ENCODE measurements at regions of chr3 and their contacts with region 1.

Region 1: GRCh38 chr3:27357665-27358258 is 11.4 kb downstream of the NEK10 start:
- DNase-seq: peak; percentile 88
- H3K4me3 Mint-ChIP-seq: no peak overlapping the region
- H3K27ac Mint-ChIP-seq: no peak overlapping the region
- H3K4me1 Mint-ChIP-seq: peaks cover 18% of the 10 kb centered on the region
- H3K27me3 Mint-ChIP-seq: peaks cover 10% of the 10 kb centered on the region

Region 2: DNA sequence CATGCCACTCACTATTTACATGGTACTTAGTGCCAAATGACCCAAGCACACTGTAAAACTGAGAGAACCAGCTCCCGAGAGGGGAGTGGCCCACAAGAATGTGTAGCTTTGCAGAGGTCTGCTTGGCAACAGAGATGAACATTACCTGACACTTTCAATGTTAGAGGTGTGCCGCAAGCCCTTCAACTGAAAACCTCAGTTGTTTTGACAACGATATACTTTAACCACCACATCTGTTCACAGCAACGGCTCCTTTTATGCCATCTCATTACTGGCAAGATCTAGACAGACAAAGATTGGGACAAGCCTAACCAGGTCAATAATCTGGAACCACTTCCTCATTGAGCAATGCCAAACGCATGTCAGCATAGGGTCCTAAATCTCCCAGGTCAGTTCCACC is 12.3 kb before region 1 on chr3:
- intact Hi-C with region 1: no loop called
- DNase-seq: peak; percentile 57
- H3K4me3 Mint-ChIP-seq: no peak overlapping the region
- H3K27ac Mint-ChIP-seq: no peak overlapping the region
- H3K4me1 Mint-ChIP-seq: peaks cover 2% of the 10 kb centered on the region
- H3K27me3 Mint-ChIP-seq: peaks cover 6% of the 10 kb centered on the region

Region 3: DNA sequence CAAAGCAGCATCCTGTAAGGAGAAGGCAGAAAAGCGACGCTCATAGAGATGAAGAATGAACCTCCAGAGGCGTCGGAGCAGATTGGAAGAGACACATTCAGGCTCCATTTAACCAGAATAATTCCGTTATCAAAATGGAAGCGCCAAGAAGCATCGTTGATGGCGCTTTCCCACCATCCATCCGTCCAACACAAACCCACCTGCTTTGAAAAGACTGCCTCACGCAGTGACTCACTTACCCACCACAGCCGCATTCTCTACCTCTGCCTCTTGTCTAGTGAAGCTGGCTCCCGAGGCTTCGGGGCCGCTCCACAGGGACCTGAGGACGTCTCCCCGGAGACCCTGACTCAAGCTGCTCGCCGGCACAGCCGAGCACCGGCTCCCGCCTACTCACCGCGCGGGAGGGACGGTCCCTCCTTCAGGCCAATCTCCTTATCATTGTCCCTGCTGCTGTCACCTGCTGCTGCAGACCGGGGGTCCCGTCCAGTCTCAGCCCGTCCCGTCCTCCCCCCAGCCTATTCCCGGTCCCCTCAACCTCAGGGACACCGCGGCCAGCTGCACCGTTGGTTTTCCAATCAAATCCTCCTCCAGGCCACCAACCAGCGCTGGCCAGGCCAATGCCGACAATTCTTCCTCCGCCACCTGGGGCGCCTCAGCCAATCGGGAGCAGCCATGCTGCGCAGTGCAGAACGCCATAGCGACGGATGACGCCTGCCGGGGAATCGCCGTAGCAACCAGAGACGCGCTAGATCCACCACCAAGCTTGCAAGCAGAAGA is 11.3 kb after region 1 on chr3 and contains the start of gene NEK10:
- intact Hi-C with region 1: loop called (anchors 1 kb)
- DNase-seq: peak; percentile 98
- H3K4me3 Mint-ChIP-seq: peak within 1 kb of the TSS; percentile 95
- H3K27ac Mint-ChIP-seq: peak within 1 kb of the TSS; percentile 77
- H3K4me1 Mint-ChIP-seq: peaks cover 13% of the 10 kb centered on the region
- H3K27me3 Mint-ChIP-seq: no peaks in the 10 kb centered on the region
- total RNA-seq, gene NEK10: 0.26 and 0.28 TPM in 2 replicates

Region 4: GRCh38 chr3:27467545-27467944 is 109.8 kb after region 1 on chr3:
- intact Hi-C with region 1: loop called (anchors 1 kb)
- DNase-seq: peak; percentile 60
- H3K4me3 Mint-ChIP-seq: no peak overlapping the region
- H3K27ac Mint-ChIP-seq: no peak overlapping the region
- H3K4me1 Mint-ChIP-seq: peaks cover 6% of the 10 kb centered on the region
- H3K27me3 Mint-ChIP-seq: no peaks in the 10 kb centered on the region

Region 5: GRCh38 chr3:27590437-27591298 is 232.9 kb after region 1 on chr3:
- intact Hi-C with region 1: loop called (anchors 5 kb)
- DNase-seq: peak; percentile 65
- H3K4me3 Mint-ChIP-seq: peak overlapping the region; percentile 55
- H3K27ac Mint-ChIP-seq: peak overlapping the region; percentile 85
- H3K4me1 Mint-ChIP-seq: peaks cover 28% of the 10 kb centered on the region
- H3K27me3 Mint-ChIP-seq: no peaks in the 10 kb centered on the region

Region 6: DNA sequence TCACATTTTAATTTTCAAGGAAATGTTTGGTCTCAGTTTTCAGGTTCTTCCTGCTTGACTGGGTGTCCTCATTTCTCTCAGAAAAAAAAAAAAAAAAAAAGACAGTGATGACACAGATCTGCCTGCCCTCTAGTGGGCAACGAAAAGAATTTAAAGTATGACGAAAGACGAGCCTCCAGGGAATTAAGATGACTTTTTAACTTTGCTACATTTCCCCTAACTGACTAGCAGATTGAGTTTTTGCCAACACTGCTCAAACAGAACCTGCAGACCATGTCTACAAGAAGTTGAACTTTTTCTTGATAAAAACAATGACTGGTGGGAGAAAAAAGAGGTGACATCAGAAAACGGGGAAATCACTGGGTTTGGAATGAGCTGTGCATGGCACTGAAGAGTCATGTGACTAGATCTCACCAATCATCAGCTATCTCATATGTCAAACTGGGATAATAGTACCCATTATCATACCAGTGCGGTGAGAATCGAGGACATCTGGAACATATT is 323.5 kb after region 1 on chr3:
- intact Hi-C with region 1: loop called (anchors 1 kb)
- DNase-seq: peak; percentile 80
- H3K4me3 Mint-ChIP-seq: peak overlapping the region; percentile 68
- H3K27ac Mint-ChIP-seq: peak overlapping the region; percentile 74
- H3K4me1 Mint-ChIP-seq: peaks cover 7% of the 10 kb centered on the region
- H3K27me3 Mint-ChIP-seq: peaks cover 11% of the 10 kb centered on the region